Heart left ventricle (tissue), 16 donors: ENCODE measurements at regions of chr2 and their contacts with region 1.

Region 1: GRCh38 chr2:46887028-46887885 is 28.3 kb downstream of the MCFD2 start:
- DNase-seq: no peak
- ATAC-seq: no peak
- H3K4me3 ChIP-seq: no peak overlapping the region
- H3K27ac ChIP-seq: peak overlapping the region in 6 of 12 donors; percentile 27 to 61 (median 46)
- H3K4me1 ChIP-seq: peaks cover 3 to 22% (median 9%) of the 10 kb centered on the region in 12 donors
- H3K27me3 ChIP-seq: no peaks in the 10 kb centered on the region
- CTCF ChIP-seq: no peak
- POLR2A ChIP-seq: no peak

Region 2: DNA sequence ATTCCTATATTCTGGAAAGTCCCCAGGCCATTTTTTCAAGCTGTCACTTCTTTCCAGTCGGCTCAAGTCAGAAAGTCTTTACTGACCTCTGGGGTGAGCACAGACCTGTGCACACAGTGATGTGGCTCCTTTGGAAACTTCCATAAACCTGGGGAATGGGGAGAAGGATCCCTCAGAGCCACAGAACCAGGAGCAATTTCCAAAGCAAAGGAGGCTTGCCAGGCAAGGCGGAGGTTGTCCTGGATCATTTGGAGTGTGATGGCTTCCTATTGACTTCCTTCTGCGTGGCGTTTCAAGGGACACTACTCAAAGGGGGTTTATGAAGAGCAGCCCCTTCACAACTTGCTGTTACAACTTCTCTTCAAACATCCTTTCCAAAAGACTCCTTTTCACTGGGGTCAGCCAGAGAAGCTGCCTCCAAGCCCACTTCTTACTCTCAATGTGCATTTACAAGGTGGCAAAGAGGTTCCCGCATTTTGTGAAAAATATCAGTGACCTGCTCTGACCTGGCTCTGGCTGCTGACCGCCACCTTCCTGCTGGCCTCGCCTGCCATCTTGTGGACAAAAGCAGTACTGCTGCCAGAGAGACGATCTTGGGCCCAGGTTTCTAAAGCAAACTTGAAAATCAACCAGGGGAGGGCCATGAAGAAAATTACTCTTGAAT is 426.1 kb before region 1 on chr2:
- intact Hi-C with region 1: loop called in 1 of 10 experiments (anchors 2 kb)
- DNase-seq: peak; percentile 69 to 87 (median 78)
- ATAC-seq: peak; percentile 34 to 75 (median 58)
- H3K4me3 ChIP-seq: no peak overlapping the region
- H3K27ac ChIP-seq: peak overlapping the region; percentile 30 to 74 (median 58)
- H3K4me1 ChIP-seq: peaks cover 7 to 40% (median 20%) of the 10 kb centered on the region in 12 donors
- H3K27me3 ChIP-seq: no peaks in the 10 kb centered on the region
- CTCF ChIP-seq: peak; percentile 98 to 100 (median 99)
- POLR2A ChIP-seq: no peak

Region 3: DNA sequence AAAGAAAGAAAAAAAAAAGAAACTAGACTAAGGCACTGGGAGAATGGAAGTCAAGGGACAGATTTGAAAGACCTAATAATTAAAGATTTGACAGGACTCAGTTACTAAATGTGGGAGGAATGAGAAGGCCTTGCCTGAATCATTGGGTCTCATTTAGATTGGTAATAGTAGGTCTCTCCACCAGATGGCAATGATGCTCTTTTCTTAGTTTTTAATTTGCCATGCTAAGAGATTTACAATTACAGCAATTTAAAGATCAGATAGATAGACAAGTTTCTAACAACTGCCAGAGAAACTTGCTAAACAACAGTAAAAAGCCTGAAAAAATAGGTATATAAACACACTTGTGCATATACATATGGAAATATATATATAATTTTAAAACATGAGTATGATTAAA is 254.9 kb before region 1 on chr2:
- intact Hi-C with region 1: loop called (anchors 1 to 5 kb)
- DNase-seq: no peak
- ATAC-seq: peak in 2 of 4 donors; percentile 37 to 61
- H3K4me3 ChIP-seq: no peak overlapping the region
- H3K27ac ChIP-seq: no peak overlapping the region
- H3K4me1 ChIP-seq: peaks cover 0 to 4% (median 0%) of the 10 kb centered on the region in 12 donors
- H3K27me3 ChIP-seq: no peaks in the 10 kb centered on the region
- CTCF ChIP-seq: peak; percentile 39 to 73 (median 59)
- POLR2A ChIP-seq: no peak

Region 4: DNA sequence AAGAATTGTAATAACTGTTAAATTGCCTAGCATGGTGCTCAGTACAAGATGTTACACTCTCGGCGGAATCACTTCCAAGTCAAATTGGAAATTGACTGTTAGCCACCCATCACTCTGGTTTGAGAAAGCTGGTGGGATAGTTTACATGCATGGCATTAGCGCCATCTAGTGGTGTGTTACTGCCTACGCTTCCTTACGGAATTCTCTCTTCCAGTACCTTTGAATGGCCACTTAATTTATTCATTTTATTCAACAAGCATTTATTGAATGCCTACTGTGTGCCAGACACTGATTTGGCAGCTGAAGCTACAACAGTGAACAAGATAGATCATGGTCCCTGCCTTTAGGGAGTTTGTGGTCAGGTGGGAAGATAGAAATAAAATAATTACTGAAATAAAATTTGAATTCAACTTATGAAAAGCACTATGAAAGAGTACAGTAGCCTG is 236.7 kb before region 1 on chr2:
- intact Hi-C with region 1: loop called in 6 of 10 experiments (anchors 5 kb)
- DNase-seq: peak in 4 of 5 donors; percentile 57 to 70 (median 64)
- ATAC-seq: peak in 3 of 4 donors; percentile 68 to 80 (median 75)
- H3K4me3 ChIP-seq: no peak overlapping the region
- H3K27ac ChIP-seq: no peak overlapping the region
- H3K4me1 ChIP-seq: peaks cover 0 to 11% (median 6%) of the 10 kb centered on the region in 12 donors
- H3K27me3 ChIP-seq: no peaks in the 10 kb centered on the region
- CTCF ChIP-seq: peak; percentile 86 to 99 (median 96)
- POLR2A ChIP-seq: no peak

Region 5: GRCh38 chr2:46657042-46657504 is 230.2 kb before region 1 on chr2:
- intact Hi-C with region 1: loop called in 5 of 10 experiments (anchors 5 kb)
- DNase-seq: peak in 1 of 5 donors; percentile 40
- ATAC-seq: peak in 3 of 4 donors; percentile 45 to 83 (median 76)
- H3K4me3 ChIP-seq: no peak overlapping the region
- H3K27ac ChIP-seq: peak overlapping the region in 3 of 12 donors; percentile 14 to 41 (median 37)
- H3K4me1 ChIP-seq: peaks cover 0 to 18% (median 12%) of the 10 kb centered on the region in 12 donors
- H3K27me3 ChIP-seq: no peaks in the 10 kb centered on the region
- CTCF ChIP-seq: peak in 11 of 12 donors; percentile 14 to 47 (median 29)
- POLR2A ChIP-seq: no peak

Region 6: DNA sequence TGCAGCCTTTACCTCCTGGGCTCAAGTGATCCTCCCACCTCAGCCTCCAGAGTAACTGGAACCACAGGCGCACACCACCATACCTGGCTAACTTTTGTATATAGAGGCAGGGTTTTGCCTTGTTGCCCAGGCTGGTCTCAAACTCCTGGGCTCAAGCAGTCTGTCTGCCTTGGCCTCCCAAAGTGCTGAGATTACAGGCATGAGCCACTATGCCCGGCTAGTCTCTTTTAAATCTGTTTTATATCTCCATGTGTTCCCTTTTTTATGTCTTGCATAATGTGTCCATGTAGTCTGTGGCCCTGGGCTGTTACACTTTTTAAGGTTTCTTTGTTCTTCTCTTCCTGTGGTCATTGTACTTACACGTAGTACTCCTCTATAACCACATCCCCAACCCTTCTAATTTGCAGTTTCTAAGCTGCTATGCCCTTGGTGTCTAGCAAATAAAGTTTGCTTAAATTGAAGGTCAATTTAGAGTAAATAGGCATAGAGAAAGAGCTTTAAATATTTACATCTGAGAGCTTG is 139.9 kb before region 1 on chr2:
- intact Hi-C with region 1: no loop called
- DNase-seq: no peak
- ATAC-seq: peak in 2 of 4 donors; percentile 52 to 62
- H3K4me3 ChIP-seq: no peak overlapping the region
- H3K27ac ChIP-seq: peak overlapping the region in 1 of 12 donors; percentile 1
- H3K4me1 ChIP-seq: peaks cover 0 to 62% (median 39%) of the 10 kb centered on the region in 12 donors
- H3K27me3 ChIP-seq: no peaks in the 10 kb centered on the region
- CTCF ChIP-seq: no peak
- POLR2A ChIP-seq: no peak